ENCODE measurements at regions of chr11 and their contacts with region 1.

Region 1: DNA sequence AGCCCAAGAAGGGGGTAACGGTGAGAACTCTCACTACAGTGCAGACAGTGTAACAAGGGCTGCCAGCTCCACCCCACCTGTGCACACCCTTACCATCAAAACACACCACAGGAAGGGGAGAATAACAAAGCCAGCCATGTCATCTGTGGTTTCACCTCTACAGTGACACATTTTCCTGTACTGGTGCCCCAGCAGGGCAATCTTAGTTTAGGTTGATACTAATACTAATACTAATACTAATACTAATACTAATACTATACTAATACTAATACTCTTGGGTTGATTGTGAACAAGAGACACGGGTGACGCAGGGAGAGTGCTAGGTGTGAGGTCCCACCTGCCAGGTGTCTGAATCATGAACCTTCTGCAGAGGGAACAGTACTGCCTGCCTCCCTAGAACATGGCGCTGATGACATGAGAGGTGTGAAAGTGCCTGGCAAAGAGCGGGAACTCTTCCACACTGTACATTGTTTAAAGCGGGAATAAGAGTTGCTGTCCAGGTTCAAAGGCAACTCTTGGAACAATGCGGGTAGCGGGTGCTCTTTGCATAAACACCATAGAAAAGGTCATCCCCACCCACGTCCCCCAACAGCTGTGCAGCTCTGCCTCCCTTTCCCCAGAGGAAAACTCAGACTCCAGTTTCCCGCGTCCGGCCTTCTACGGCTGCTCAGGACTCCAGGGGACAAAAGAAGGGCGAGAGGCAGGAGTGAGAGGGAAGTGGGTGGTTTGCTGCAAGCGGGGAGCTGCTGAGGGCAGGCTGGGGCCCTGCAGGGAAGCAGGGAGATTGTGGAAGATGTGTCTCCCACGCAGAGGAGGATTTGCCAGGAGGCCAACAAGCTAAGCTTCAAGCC is 25.0 kb upstream of the TMPRSS4 start:
- DNase-seq: no peak
- H3K4me3 Mint-ChIP-seq: no peak overlapping the region
- H3K27ac Mint-ChIP-seq: no peak overlapping the region
- H3K4me1 Mint-ChIP-seq: no peaks in the 10 kb centered on the region
- H3K27me3 Mint-ChIP-seq: peaks cover 30% of the 10 kb centered on the region
- CTCF ChIP-seq: no peak

Region 2: DNA sequence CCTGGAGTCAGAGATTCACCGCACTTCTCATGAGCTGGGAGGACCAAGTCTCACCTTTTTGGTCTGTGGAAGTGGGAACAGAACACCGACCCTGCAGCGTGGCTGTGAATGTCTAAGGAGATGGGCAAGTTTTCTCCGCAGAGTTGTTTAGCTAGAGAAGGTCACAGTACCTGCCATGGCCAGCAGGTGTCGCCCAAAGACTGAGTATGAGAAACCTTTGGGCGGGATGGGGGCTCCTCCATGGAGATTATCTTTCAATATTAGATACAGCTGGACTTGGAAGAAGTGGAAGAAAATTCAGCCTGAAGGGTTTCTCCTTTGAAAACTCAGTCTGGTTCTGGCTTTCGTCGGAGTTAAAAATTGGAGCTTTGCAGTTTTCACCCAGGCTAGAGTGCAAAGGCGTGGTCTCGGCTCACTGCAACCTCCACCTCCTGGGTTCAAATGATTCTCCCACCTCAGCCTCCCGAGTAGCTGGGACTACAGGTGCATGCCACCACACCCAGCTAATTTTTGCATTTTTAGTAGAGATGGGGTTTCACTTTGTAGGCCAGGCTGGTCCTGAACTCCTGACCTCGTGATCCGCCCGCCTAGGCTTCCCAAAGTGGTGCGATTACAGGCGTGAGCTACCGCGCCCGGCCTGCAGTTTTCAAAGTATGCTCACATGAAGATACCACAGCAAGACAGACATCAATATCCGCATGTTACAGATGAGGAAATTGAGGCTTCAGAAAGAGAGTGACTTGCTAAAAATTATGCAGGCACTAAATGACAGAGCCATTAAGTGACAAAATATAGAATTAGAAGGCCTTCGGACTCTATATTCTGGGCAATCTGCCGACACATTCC is 244.1 kb before region 1 on chr11:
- CTCF ChIA-PET with region 1: interaction called, 44 read pairs
- POLR2A ChIA-PET with region 1: no interaction called
- intact Hi-C with region 1: loop called (anchors 1 kb)
- DNase-seq: peak; percentile 59
- H3K4me3 Mint-ChIP-seq: no peak overlapping the region
- H3K27ac Mint-ChIP-seq: no peak overlapping the region
- H3K4me1 Mint-ChIP-seq: no peaks in the 10 kb centered on the region
- H3K27me3 Mint-ChIP-seq: peaks cover 32% of the 10 kb centered on the region
- CTCF ChIP-seq: peak; percentile 87

Region 3: DNA sequence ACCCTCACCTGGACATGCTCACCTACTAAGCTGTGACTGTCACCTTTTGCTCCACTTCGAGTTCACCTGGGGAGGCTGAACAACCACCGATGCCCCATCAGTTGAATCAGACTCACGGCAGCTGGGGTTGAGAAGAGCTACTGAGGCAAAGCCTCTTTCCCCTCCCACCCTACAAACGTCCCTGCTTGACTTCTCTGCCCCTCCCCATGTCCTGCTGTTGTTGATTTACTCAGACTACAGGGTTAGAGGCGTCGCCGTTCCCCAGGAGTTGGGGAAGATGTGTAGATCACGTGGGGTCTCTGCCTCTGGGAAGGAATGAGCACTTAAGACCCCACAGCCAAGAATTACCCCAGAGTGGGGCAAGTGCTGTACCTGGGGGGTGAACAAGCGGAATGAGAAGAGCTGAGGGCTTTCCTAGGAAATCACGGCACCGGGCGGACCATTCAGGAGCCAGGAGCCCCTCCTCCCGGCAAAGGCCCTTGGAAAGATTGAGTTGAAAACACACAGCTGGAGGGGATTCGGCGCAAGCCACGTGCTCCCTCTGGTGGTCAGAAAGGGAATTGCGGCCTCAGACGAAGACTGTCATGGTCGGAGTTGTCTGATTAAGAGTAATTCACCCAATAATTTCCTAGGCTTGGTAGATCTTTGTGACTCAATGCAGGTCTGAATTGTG is 234.3 kb before region 1 on chr11:
- CTCF ChIA-PET with region 1: interaction called, 10 read pairs
- POLR2A ChIA-PET with region 1: interaction called, 3 read pairs
- intact Hi-C with region 1: loop called (anchors 1 kb)
- DNase-seq: peak; percentile 70
- H3K4me3 Mint-ChIP-seq: no peak overlapping the region
- H3K27ac Mint-ChIP-seq: peak overlapping the region; percentile 29
- H3K4me1 Mint-ChIP-seq: peaks cover 11% of the 10 kb centered on the region
- H3K27me3 Mint-ChIP-seq: no peaks in the 10 kb centered on the region
- CTCF ChIP-seq: peak; percentile 94

Region 4: DNA sequence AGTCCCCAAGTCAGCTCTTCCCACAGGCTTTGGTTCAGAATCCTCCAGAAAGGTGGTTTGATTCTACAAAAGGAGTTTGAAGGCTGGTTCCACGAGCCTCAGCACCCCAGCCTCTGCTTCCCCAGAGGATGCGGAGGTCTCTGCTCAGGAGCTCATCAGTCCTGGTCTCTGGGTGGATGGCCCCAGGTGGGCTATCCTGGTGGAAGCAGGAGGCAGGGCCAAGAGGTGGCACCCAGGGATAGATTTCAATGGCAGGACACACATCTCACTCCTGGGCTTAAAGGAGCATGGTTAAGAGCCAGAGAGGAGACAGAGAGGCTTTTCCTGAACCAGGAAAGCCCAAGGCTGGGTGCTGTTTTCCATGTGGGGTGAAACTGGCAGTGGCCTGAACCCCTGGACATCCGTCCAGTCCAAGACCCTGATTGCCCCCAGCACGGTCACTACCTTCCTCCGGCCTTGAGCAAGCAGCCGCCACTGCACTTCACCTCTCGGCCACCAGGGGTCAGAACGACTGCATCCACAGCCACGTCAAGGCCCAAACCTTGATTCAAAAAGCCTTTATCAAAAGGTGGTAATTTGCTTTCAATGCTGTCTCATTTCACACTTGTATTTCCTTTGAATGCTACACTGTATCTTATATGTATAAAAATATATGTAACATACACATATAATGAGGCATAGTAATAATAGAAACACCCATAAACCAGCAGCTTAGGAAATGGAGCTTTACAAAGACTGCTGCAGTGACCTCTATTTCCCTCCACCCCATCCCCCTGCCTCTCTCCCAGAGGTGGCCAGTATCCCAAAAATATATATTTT is 208.0 kb before region 1 on chr11:
- CTCF ChIA-PET with region 1: interaction called, 38 read pairs
- POLR2A ChIA-PET with region 1: interaction called, 3 read pairs
- intact Hi-C with region 1: loop called (anchors 1 kb)
- DNase-seq: peak; percentile 63
- H3K4me3 Mint-ChIP-seq: no peak overlapping the region
- H3K27ac Mint-ChIP-seq: no peak overlapping the region
- H3K4me1 Mint-ChIP-seq: no peaks in the 10 kb centered on the region
- H3K27me3 Mint-ChIP-seq: peaks cover 2% of the 10 kb centered on the region
- CTCF ChIP-seq: peak; percentile 97

Region 5: DNA sequence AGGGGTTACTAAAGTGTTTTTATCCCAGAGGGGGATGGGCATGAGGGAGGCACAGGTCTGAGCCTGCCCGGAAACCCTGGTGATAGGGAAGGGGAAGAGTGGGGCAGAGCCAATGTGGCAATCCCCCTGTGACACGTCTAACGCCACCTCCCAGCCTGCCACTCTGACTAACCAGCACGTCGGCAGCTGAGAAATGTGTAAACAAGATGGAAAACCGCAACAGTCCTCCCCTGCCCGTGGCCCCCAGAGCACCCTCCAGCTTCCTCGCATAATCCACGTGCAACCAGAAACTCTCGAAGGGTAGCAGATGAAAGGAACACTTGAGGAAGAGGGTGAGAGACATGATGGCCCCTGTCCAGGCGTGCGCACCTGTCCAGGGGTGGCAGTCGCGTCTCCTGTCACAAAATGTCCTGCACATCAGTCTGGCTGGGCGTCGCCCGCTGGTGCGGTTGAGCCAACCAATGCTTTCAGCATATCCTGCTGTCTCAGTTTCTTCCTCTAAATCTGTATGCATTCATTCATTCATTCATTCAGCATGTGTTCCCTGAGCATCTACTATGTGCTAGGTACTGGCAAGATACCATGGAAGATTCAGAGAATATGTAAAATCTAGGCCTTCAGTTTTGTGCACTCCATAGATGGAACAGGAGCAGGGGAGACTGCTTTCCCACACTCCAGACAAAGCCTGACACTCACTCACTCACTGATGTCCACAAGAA is 29.6 kb after region 1 on chr11:
- CTCF ChIA-PET with region 1: interaction called, 12 read pairs
- POLR2A ChIA-PET with region 1: no interaction called
- intact Hi-C with region 1: no loop called
- DNase-seq: no peak
- H3K4me3 Mint-ChIP-seq: no peak overlapping the region
- H3K27ac Mint-ChIP-seq: no peak overlapping the region
- H3K4me1 Mint-ChIP-seq: peaks cover 5% of the 10 kb centered on the region
- H3K27me3 Mint-ChIP-seq: peaks cover 17% of the 10 kb centered on the region
- CTCF ChIP-seq: no peak